HEK293 (cell line): ENCODE measurements at regions of chr14 and their contacts with region 1.

Region 1: DNA sequence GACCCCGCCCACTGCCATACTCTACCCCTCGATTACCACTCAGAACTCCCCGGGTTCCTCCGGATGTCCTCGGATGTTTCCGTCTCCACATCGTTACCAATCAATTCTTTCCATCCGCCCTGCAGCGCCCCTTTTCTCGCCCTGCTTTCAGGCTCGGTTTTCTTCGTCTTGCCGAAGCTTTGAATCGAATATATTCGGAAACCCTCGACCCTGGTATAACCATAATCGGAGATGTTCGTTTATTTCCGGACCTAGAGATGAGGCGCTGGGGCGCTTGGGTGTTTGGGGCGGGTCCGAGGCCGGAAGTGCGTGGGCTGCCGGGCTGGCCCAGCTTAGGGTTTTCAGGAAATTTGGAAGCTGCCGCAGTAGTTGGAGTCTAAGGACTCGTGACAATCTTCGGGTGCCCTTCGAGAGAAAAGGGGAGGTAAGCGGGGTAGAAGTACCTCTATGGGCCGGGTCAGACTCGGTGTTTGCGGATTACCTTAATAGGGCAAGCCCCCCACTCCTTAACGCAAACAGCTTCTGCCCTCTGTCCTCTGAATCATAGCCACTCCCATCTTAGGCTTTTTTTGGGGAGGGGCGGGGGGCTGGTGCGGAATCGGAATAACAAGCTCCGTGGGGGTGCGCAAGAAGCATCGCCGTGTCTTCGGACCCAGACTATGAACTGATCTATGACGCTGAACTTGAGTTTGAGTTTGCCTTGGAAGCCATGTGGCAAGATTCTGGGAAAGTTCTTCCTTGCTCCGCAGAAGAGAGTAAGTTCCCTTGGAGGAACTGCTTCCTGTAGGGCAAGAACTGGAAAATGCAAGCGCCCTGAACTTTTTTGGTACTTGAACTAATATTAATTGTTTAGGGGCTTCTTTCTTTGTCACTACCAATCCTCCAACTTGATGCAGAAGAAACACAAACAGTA is at the start of gene C14orf119:
- H3K4me3 ChIP-seq: peak within 1 kb of the TSS; percentile 97
- H3K27ac ChIP-seq: peak within 1 kb of the TSS; percentile 92
- H3K4me1 ChIP-seq: peaks cover 10% of the 10 kb centered on the region; the same call in 1 of the 2 replicates
- CTCF ChIP-seq: no peak

Region 2: DNA sequence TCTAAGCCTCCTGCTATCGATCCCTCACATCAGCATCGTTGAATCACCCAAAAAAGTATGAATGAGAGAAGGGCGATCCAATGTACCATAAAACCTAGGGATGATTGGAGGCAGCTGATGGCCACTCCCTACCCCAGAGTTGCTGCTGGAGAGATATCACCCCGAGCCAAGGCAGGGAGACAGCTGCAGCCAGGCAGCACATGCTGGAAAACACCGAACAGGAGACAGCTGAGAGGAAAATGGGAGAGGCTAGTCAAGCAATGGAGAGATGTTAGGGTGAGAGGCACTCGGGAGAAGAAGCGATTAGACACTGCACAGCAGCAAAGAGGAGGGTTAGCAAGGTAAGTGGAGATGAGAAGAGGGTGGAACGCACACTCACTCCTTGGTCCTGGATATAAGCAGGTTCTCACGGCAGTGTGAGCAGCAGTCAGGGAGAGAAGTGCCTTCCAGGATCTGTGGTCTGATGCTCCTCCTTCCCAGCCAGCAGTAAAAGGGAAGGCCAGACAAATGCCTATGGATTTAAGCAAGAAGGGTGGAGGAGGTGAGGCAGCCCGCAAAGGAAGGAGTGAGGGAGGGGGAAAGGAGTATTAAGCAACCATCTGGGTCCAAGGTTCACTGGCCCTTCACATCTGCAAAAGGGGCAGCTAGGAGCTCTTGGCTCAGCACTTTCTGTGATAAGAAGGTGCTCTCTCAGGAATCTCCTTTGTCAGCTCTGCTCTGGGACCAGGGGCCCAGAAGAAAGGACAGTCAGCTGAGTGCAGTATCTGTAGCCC is 280.3 kb before region 1 on chr14 and contains the start of gene SLC7A7:
- CTCF ChIA-PET with region 1: no interaction called
- POLR2A ChIA-PET with region 1: no interaction called
- H3K4me3 ChIP-seq: no peak within 1 kb of the TSS
- H3K27ac ChIP-seq: no peak within 1 kb of the TSS
- H3K4me1 ChIP-seq: no peaks in the 10 kb centered on the region
- CTCF ChIP-seq: no peak

Region 3: DNA sequence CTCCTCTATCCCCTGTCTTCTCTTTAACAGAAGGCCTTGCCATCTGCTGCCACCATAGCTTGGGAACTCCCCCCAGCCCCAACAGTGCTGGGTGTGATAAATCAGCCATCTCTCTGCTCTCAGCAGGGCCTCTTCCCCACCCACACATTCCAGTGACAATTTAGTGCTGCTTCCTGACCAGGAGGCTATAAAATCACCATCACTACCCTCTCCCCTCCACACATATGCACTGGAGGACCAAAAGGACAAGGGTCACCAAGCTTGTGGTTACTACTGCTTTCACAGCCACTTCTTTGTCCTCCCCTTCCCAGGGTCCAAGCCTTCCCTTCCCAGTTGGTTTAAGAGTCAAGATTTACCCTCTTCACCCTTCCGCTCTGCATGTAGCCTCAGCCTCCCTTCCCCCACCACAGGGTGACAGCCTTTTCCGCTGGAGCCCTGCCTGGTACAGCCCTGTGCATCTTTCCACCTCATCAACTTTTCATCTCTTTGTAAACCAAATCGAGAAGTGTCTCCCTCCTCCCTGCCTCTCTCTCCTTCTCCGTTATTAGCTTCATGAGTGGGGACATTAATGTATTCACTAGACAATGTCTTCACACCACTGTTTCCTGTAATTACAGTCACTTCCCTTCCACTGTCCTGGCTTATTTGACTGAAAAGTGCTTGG is 70.2 kb before region 1 on chr14:
- CTCF ChIA-PET with region 1: no interaction called
- POLR2A ChIA-PET with region 1: no interaction called
- H3K4me3 ChIP-seq: no peak overlapping the region
- H3K27ac ChIP-seq: no peak overlapping the region
- H3K4me1 ChIP-seq: peaks cover 12% of the 10 kb centered on the region
- CTCF ChIP-seq: no peak

Region 4: DNA sequence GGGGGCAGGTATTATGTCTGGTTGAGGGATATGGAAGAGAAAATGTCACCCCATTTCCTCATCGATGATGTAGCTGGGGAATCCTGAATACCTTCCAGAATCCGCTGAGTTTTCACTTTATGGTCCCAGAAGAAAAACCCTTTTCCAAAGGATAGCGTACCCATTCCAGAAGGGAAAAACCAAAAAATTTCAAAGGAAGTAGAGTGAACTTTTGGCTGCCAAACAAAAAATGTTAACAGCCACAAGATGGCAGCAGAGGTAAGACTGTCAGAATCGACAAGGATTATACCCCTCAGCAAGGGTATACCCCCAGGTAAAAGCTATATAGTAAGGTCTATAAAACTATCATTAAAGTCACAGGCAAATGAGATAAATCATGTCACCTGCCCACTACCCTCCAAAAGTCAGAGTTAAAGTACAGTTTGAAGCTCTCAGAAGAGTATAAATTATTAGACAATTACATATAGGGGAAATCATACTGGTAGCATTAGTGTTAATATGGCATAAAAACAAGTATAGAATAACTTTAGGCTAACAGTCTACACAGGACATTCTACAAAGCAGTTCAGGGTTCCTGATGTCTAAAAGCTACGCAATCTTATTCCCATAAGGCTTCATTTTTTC is 18.6 kb before region 1 on chr14:
- CTCF ChIA-PET with region 1: interaction called, 36 read pairs
- POLR2A ChIA-PET with region 1: interaction called, 48 read pairs
- H3K4me3 ChIP-seq: no peak overlapping the region
- H3K27ac ChIP-seq: no peak overlapping the region
- H3K4me1 ChIP-seq: peaks cover 6% of the 10 kb centered on the region; the same call in 1 of the 2 replicates
- CTCF ChIP-seq: no peak

Region 5: GRCh38 chr14:23130871-23131270 is 35.4 kb after region 1 on chr14:
- CTCF ChIA-PET with region 1: no interaction called
- POLR2A ChIA-PET with region 1: no interaction called
- H3K4me3 ChIP-seq: no peak overlapping the region
- H3K27ac ChIP-seq: no peak overlapping the region
- H3K4me1 ChIP-seq: no peaks in the 10 kb centered on the region
- CTCF ChIP-seq: no peak

Region 6: DNA sequence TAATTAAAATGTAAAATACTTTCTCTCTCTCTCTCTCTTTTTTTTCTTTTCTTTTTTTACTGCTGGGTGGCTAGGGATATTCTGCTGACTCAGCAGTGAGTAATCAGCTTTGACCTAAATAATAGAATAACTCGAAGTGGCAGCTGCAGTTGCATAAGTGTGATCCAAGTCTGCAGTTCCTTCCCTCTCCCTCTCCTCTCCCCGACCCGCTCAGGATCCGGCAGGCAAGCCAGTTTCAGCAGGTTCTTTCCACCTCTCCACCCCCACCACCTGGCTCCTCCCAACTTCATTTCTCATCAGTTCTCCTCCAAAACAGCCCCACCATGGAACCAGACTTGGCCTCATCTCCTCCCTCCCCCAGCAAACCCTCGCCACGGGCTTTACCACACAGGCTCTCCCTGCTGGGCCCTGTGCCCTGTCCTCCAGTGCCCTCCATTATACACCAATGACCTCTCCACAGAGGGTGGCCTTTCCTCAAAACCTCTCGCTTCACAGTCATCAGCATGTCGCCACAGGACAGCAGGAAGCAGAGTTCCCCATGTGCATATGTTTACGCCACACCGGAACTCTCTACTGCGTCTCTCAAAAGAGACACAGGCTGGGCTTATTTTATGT is 65.6 kb after region 1 on chr14:
- CTCF ChIA-PET with region 1: no interaction called
- POLR2A ChIA-PET with region 1: no interaction called
- H3K4me3 ChIP-seq: no peak overlapping the region
- H3K27ac ChIP-seq: no peak overlapping the region
- H3K4me1 ChIP-seq: no peaks in the 10 kb centered on the region; the same call in 1 of the 2 replicates
- CTCF ChIP-seq: no peak

Region 7: DNA sequence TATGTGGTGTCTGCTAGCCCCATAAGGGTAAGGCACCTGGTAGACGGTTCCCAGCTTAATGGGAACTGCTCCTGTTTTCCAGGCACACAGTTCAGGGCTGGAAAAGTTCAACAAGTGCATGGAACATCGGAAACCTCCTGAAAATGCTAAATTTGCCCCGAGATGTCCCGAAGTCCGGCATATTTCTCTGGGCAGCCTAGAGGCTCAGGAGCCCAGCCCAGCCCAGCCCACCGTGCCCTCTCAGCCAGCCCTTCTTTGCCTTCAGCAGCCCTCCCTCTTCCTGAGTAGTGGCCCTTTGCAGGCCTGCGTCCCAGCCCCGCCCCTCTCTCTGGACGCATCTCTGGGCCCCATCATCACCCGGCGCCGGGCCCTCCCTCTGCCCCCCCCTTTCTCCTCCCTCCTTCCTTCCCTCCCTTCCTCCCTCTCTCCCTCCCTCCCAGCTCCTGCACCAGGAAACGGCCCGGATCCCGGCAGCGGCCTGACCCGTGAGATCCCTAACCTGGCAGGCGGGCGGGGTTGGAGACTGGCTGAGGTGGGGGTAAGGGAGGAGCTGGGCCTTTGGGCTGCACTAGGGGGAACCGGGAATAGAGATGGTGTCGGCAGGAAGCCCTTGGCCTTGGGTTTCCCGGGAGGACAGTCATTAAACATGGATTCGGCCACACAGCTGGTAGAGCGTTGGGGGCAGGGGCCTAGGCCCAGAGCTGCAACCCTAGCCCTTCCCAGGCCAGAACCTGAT is 211.1 kb after region 1 on chr14 and contains the start of gene BCL2L2:
- CTCF ChIA-PET with region 1: no interaction called
- POLR2A ChIA-PET with region 1: interaction called, 12 read pairs
- H3K4me3 ChIP-seq: peak within 1 kb of the TSS; percentile 56
- H3K27ac ChIP-seq: peak within 1 kb of the TSS; percentile 85
- H3K4me1 ChIP-seq: peaks cover 6% of the 10 kb centered on the region; the same call in 1 of the 2 replicates
- CTCF ChIP-seq: no peak